Activated CD4-positive, alpha-beta memory T cell treated with anti-CD3 and anti-CD28 coated beads for 36 hours (primary cell): ENCODE measurements at regions of chr2 and their contacts with region 1.

Region 1: GRCh38 chr2:231494669-231495068 is 30.4 kb upstream of the NCL start:
- DNase-seq: no peak
- H3K4me3 Mint-ChIP-seq: no peak overlapping the region
- H3K27ac Mint-ChIP-seq: no peak overlapping the region
- H3K4me1 Mint-ChIP-seq: no peaks in the 10 kb centered on the region
- H3K27me3 Mint-ChIP-seq: no peaks in the 10 kb centered on the region

Region 2: GRCh38 chr2:231482806-231483391 is 11.8 kb before region 1 on chr2:
- CTCF ChIA-PET with region 1: interaction called, 11 read pairs
- POLR2A ChIA-PET with region 1: no interaction called
- intact Hi-C with region 1: no loop called
- DNase-seq: peak; percentile 84
- H3K4me3 Mint-ChIP-seq: peak overlapping the region; percentile 80
- H3K27ac Mint-ChIP-seq: peak overlapping the region; percentile 88
- H3K4me1 Mint-ChIP-seq: peaks cover 10% of the 10 kb centered on the region
- H3K27me3 Mint-ChIP-seq: no peaks in the 10 kb centered on the region

Region 3: DNA sequence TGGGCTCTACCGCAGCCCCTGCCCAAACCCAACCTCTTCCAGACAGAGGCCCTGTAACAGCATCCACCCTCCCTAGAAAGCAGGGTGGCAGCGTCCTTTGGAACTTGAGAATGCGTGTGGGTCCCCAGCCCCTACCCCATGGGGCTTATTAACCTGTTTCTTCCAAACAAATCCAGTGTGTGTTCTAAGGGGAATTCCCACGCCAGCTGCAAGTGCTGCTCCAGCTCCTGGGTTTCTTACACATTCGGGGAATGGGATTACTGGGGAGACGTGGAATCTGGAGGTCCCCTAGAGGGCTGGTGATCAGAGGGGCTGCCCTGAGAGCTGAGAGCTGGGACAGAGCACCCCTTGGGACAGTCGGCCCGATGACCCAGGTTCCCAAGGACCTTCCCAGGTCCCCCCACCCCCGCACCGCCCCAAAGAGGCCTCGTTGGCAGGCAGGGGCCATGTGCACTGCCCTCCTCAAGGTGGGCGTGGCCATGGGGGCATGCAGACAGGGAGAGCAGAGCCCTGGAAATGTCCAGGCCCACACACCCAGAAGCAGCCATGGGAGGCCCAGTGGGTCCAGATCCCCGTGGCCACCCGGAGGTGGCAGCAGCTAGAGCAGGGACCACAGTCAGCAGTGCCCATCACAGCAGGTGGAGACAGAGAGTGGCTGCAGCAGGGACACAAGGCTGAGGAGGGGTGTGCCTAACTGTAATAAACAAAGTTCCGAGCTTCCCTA is 79.2 kb after region 1 on chr2:
- CTCF ChIA-PET with region 1: no interaction called
- POLR2A ChIA-PET with region 1: no interaction called
- intact Hi-C with region 1: no loop called
- DNase-seq: no peak
- H3K4me3 Mint-ChIP-seq: no peak overlapping the region
- H3K27ac Mint-ChIP-seq: no peak overlapping the region
- H3K4me1 Mint-ChIP-seq: peaks cover 2% of the 10 kb centered on the region
- H3K27me3 Mint-ChIP-seq: peaks cover 2% of the 10 kb centered on the region